Heart right ventricle (tissue), 16 donors: ENCODE measurements at regions of chr11 and their contacts with region 1.

Region 1: DNA sequence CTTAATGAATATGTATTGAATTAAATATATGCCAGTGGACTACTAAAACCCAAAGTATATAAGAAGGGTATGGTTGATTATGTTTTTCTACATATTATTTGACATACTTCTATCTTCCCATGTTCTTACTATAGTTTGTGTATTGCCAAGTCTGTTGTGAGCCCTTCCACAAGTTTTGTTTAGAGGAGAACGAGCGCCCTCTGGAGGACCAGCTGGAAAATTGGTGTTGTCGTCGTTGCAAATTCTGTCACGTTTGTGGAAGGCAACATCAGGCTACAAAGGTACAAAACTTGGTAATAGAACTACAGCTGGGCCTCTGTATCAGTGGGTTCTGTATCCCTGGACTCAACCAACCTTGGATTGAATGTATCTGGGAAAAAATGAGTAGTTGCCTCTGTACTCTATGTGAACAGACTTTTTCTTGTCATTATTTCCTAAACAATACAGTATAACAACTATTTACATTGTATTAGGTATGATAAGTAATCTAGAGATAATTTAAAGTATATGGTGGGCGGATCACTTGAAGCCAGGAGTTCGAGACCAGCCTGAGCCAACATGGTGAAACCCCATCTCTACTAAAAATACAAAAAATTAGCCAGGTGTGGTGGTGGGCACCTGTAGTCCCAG is 38.7 kb upstream of the TTC36 start:
- DNase-seq: peak; percentile 50 to 61
- ATAC-seq: peak in 7 of 8 donors; percentile 46 to 72 (median 62)
- H3K4me3 ChIP-seq: no peak overlapping the region
- H3K27ac ChIP-seq: no peak overlapping the region
- H3K4me1 ChIP-seq: peaks cover 0 to 9% (median 0%) of the 10 kb centered on the region in 9 donors
- H3K27me3 ChIP-seq: no peaks in the 10 kb centered on the region
- CTCF ChIP-seq: peak; percentile 58 to 90 (median 82)

Region 2: GRCh38 chr11:118145285-118146227 is 343.0 kb before region 1 on chr11:
- intact Hi-C with region 1: loop called in 4 of 10 experiments (anchors 5 to 10 kb)
- DNase-seq: peak; percentile 83 to 85
- ATAC-seq: peak; percentile 83 to 94 (median 88)
- H3K4me3 ChIP-seq: peak overlapping the region; percentile 39 to 70 (median 62)
- H3K27ac ChIP-seq: peak overlapping the region in 9 of 10 donors; percentile 35 to 84 (median 71)
- H3K4me1 ChIP-seq: peaks cover 0 to 58% (median 30%) of the 10 kb centered on the region in 9 donors
- H3K27me3 ChIP-seq: peaks cover 0 to 33% (median 4%) of the 10 kb centered on the region in 7 donors
- CTCF ChIP-seq: peak; percentile 79 to 95 (median 94)

Region 3: GRCh38 chr11:118295834-118296454 is 192.7 kb before region 1 on chr11:
- intact Hi-C with region 1: loop called in 4 of 10 experiments (anchors 5 to 10 kb)
- DNase-seq: no peak
- ATAC-seq: peak in 1 of 8 donors; percentile 29
- H3K4me3 ChIP-seq: no peak overlapping the region
- H3K27ac ChIP-seq: no peak overlapping the region
- H3K4me1 ChIP-seq: no peaks in the 10 kb centered on the region
- H3K27me3 ChIP-seq: peaks cover 0 to 6% (median 0%) of the 10 kb centered on the region in 7 donors
- CTCF ChIP-seq: peak in 8 of 9 donors; percentile 10 to 68 (median 59)

Region 4: GRCh38 chr11:118374729-118375128 is 113.9 kb before region 1 on chr11:
- intact Hi-C with region 1: loop called in 1 of 10 experiments (anchors 5 kb)
- DNase-seq: no peak
- ATAC-seq: no peak
- H3K4me3 ChIP-seq: no peak overlapping the region
- H3K27ac ChIP-seq: no peak overlapping the region
- H3K4me1 ChIP-seq: no peaks in the 10 kb centered on the region
- H3K27me3 ChIP-seq: no peaks in the 10 kb centered on the region
- CTCF ChIP-seq: no peak

Region 5: GRCh38 chr11:118435893-118436624 is 52.5 kb before region 1 on chr11 and contains the start of gene KMT2A:
- intact Hi-C with region 1: loop called in 3 of 10 experiments (anchors 2 to 10 kb)
- DNase-seq: peak; percentile 99
- ATAC-seq: peak; percentile 90 to 95 (median 94)
- H3K4me3 ChIP-seq: peak within 1 kb of the TSS; percentile 84 to 100 (median 98)
- H3K27ac ChIP-seq: peak within 1 kb of the TSS; percentile 78 to 95 (median 93)
- H3K4me1 ChIP-seq: peaks cover 4 to 54% (median 42%) of the 10 kb centered on the region in 9 donors
- H3K27me3 ChIP-seq: no peaks in the 10 kb centered on the region
- CTCF ChIP-seq: peak in 1 of 9 donors; percentile 34
- total RNA-seq, gene KMT2A: 16.3 to 44.5 (median 38.9) TPM

Region 6: GRCh38 chr11:118581057-118581456 is 92.5 kb after region 1 on chr11:
- intact Hi-C with region 1: no loop called
- DNase-seq: peak in 1 of 2 donors; percentile 35
- ATAC-seq: peak in 6 of 8 donors; percentile 32 to 77 (median 50)
- H3K4me3 ChIP-seq: peak overlapping the region in 1 of 10 donors; percentile 31
- H3K27ac ChIP-seq: peak overlapping the region in 8 of 10 donors; percentile 24 to 84 (median 42)
- H3K4me1 ChIP-seq: peaks cover 0 to 68% (median 50%) of the 10 kb centered on the region in 9 donors
- H3K27me3 ChIP-seq: no peaks in the 10 kb centered on the region
- CTCF ChIP-seq: no peak